MCF 10A (cell line): ENCODE measurements at regions of chr11 and their contacts with region 1.

Region 1: GRCh38 chr11:125874556-125875124 is 12.8 kb upstream of the HYLS1 start:
- DNase-seq: peak; percentile 81
- H3K4me3 Mint-ChIP-seq: no peak overlapping the region
- H3K27ac Mint-ChIP-seq: no peak overlapping the region
- H3K4me1 Mint-ChIP-seq: no peaks in the 10 kb centered on the region
- H3K27me3 Mint-ChIP-seq: no peaks in the 10 kb centered on the region
- CTCF ChIP-seq: peak; percentile 86

Region 2: GRCh38 chr11:124961972-124962609 is 912.5 kb before region 1 on chr11:
- CTCF ChIA-PET with region 1: no interaction called
- POLR2A ChIA-PET with region 1: no interaction called
- intact Hi-C with region 1: loop called (anchors 2 kb)
- DNase-seq: peak; percentile 85
- H3K4me3 Mint-ChIP-seq: no peak overlapping the region
- H3K27ac Mint-ChIP-seq: no peak overlapping the region
- H3K4me1 Mint-ChIP-seq: no peaks in the 10 kb centered on the region
- H3K27me3 Mint-ChIP-seq: no peaks in the 10 kb centered on the region
- CTCF ChIP-seq: peak; percentile 69

Region 3: GRCh38 chr11:125305345-125305744 is 569.3 kb before region 1 on chr11:
- CTCF ChIA-PET with region 1: no interaction called
- POLR2A ChIA-PET with region 1: no interaction called
- intact Hi-C with region 1: no loop called
- DNase-seq: no peak
- H3K4me3 Mint-ChIP-seq: no peak overlapping the region
- H3K27ac Mint-ChIP-seq: no peak overlapping the region
- H3K4me1 Mint-ChIP-seq: peaks cover 12% of the 10 kb centered on the region
- H3K27me3 Mint-ChIP-seq: no peaks in the 10 kb centered on the region
- CTCF ChIP-seq: no peak

Region 4: DNA sequence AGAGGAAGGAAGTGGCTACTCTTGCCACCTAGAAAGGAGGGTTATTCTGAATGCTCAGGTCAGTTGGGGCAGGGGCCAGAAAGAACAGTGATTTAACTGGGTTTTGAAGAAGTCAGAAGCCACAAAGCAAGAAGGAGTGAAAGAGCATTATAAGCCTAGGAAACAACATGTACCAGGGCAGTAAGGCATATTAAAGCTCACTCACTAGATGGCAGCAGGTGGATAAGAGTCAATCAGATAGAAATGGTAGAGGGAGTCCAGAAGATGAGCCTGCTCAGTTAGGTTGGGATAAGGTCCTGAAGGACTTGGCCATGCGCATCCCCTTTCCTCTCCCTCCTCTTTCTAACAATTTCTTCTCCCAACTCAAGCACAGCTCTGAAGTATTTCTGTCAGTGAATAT is 150.5 kb before region 1 on chr11:
- CTCF ChIA-PET with region 1: interaction called, 3 read pairs
- POLR2A ChIA-PET with region 1: no interaction called
- intact Hi-C with region 1: loop called (anchors 1 kb)
- DNase-seq: peak; percentile 23
- H3K4me3 Mint-ChIP-seq: no peak overlapping the region
- H3K27ac Mint-ChIP-seq: no peak overlapping the region
- H3K4me1 Mint-ChIP-seq: no peaks in the 10 kb centered on the region
- H3K27me3 Mint-ChIP-seq: peaks cover 34% of the 10 kb centered on the region
- CTCF ChIP-seq: peak; percentile 27

Region 5: GRCh38 chr11:125910226-125910849 is 35.7 kb after region 1 on chr11:
- CTCF ChIA-PET with region 1: no interaction called
- POLR2A ChIA-PET with region 1: no interaction called
- intact Hi-C with region 1: no loop called
- DNase-seq: no peak
- H3K4me3 Mint-ChIP-seq: no peak overlapping the region
- H3K27ac Mint-ChIP-seq: no peak overlapping the region
- H3K4me1 Mint-ChIP-seq: no peaks in the 10 kb centered on the region
- H3K27me3 Mint-ChIP-seq: peaks cover 49% of the 10 kb centered on the region
- CTCF ChIP-seq: no peak

Region 6: DNA sequence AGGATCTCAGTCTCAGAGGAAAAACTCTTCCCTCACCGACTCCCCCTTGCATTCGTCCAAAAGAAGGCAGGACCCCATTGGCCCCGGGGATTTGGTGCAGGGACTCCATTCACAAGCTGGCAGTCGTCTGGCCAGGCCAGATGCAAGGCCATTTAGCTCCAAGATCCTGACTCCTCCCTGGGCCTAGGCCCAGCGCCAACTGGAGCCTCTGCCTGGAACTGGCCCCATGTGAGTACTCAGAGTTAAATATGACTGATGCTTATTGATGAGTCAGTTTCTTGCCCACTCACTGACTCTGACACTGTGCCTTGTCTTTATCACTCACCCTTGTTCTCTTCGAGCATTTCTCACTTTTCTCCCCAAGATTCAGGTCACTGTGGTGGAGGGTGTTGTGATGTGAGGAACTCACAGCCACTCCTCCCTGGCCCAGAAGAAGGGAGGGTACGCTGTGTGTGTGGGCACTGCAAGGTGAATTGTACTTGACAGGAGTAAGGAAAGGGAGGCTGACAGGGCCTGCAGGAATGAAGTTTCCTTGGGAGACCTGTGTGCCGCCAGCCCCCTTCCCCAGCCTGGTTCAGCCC is 457.6 kb after region 1 on chr11:
- CTCF ChIA-PET with region 1: no interaction called
- POLR2A ChIA-PET with region 1: no interaction called
- intact Hi-C with region 1: no loop called
- DNase-seq: peak; percentile 94
- H3K4me3 Mint-ChIP-seq: no peak overlapping the region
- H3K27ac Mint-ChIP-seq: peak overlapping the region; percentile 21
- H3K4me1 Mint-ChIP-seq: peaks cover 21% of the 10 kb centered on the region
- H3K27me3 Mint-ChIP-seq: no peaks in the 10 kb centered on the region
- CTCF ChIP-seq: no peak